A549 (cell line): ENCODE measurements at regions of chr12 and their contacts with region 1.

Region 1: DNA sequence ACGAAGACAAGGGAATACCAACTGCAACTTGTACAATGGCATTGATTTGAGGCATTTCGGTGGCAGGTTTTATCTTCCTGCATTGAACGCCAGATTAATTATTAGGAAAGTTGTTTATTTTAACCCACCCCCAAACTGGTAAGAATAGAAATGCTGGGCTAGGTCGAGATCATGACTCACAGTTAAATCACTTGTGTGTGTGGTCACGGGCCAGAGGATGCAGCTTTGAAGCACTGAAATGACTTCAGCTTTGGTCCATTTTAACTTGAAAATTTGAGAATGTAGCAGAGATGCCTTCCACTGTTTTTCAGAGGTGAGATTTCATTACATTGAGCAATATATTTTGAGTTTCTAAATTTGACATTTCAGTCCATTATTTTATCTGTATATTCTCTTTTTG is 23.6 kb upstream of the KCNH3 start:
- DNase-seq: peak; percentile 47 to 64
- ATAC-seq: peak in 1 of 2 experiments; percentile 68; a peak in 3 of 6 replicates
- H3K4me3 ChIP-seq: no peak overlapping the region
- H3K27ac ChIP-seq: peak overlapping the region; percentile 70 to 87
- H3K4me1 ChIP-seq: peaks cover 81% of the 10 kb centered on the region
- CTCF ChIP-seq: no peak
- EP300 ChIP-seq: peak; percentile 23 to 27; a peak in 1 of 5 replicates
- POLR2A ChIP-seq: no peak
- RAD21 ChIP-seq: 0 out of 5 replicates have a peak, but pooled peaks of 1 of the 2 experiments have one; percentile 30

Region 2: DNA sequence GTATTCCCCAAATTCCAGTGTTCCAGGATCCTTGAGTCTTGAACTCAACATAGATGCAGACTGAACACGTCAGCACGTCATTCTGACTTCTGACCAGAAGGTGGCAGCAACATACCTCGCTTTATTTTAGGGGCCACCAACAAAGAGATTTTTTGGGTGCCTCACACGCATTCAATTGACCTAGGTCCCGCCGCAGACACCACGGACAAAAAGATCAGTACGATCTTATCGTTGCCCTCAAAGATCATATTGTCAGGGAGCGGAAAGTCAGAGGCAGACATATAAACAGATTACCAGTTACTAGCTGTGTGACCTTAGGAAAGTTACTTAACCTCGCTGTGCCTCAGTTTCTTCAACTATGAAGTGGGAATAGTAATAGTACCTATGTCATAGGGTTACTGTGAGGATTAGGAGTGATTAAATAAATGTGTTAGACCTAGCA is 226.8 kb before region 1 on chr12:
- CTCF ChIA-PET with region 1: interaction called, 19 read pairs
- POLR2A ChIA-PET with region 1: no interaction called
- DNase-seq: peak; percentile 66 to 70
- ATAC-seq: peak; percentile 47 to 66; a peak in 4 of 6 replicates
- H3K4me3 ChIP-seq: no peak overlapping the region
- H3K27ac ChIP-seq: no peak overlapping the region
- H3K4me1 ChIP-seq: 0 out of 3 replicates have a peak, but pooled peaks cover 12% of the 10 kb centered on the region
- CTCF ChIP-seq: peak; percentile 96
- EP300 ChIP-seq: no peak
- POLR2A ChIP-seq: no peak
- RAD21 ChIP-seq: peak; percentile 89 to 91

Region 3: GRCh38 chr12:49366652-49367380 is 148.4 kb before region 1 on chr12:
- CTCF ChIA-PET with region 1: interaction called, 484 read pairs
- POLR2A ChIA-PET with region 1: interaction called, 25 read pairs
- DNase-seq: peak; percentile 95 to 97
- ATAC-seq: peak; percentile 87 to 90
- H3K4me3 ChIP-seq: peak overlapping the region; percentile 86
- H3K27ac ChIP-seq: peak overlapping the region; percentile 95 to 96
- H3K4me1 ChIP-seq: peaks cover 36% of the 10 kb centered on the region
- CTCF ChIP-seq: no peak
- EP300 ChIP-seq: no peak
- POLR2A ChIP-seq: peak; percentile 65
- RAD21 ChIP-seq: no peak

Region 4: GRCh38 chr12:49489720-49490119 is 25.5 kb before region 1 on chr12:
- CTCF ChIA-PET with region 1: interaction called, 17 read pairs
- POLR2A ChIA-PET with region 1: no interaction called
- DNase-seq: no peak
- ATAC-seq: peak in 1 of 2 experiments; percentile 41; a peak in 3 of 6 replicates
- H3K4me3 ChIP-seq: no peak overlapping the region
- H3K27ac ChIP-seq: no peak overlapping the region
- H3K4me1 ChIP-seq: peaks cover 26% of the 10 kb centered on the region
- CTCF ChIP-seq: no peak
- EP300 ChIP-seq: no peak
- POLR2A ChIP-seq: no peak
- RAD21 ChIP-seq: no peak

Region 5: DNA sequence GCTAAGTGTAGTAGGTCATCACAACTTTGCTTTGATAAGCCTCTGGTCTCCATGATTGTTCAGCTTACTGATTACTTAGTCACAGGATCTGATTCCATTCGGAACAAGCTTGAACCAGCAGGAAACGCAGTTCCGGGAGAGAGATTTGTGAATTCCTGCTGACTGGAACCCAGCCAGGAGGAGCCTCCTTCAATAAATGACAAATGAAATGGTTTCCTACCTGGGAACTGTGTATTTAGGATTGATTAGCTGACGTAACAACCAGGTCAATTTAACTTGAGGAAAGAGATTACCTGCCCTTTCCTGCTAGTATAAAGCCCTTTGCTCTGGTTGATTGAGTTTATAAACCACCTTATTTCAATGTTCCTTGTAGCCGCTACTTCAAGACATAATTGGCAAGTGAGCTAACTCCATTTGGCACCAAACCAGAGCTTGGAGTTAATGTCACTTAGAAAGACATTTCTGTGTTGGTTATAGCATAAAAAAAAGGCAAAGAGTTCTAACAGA is 11.5 kb before region 1 on chr12:
- CTCF ChIA-PET with region 1: interaction called, 31 read pairs
- POLR2A ChIA-PET with region 1: interaction called, 4 read pairs
- DNase-seq: peak; percentile 44 to 88
- ATAC-seq: peak in 1 of 2 experiments; percentile 66; a peak in 3 of 6 replicates
- H3K4me3 ChIP-seq: peak overlapping the region; percentile 25; the same call in 2 of the 3 replicates
- H3K27ac ChIP-seq: peak overlapping the region; percentile 78 to 84
- H3K4me1 ChIP-seq: peaks cover 60% of the 10 kb centered on the region
- CTCF ChIP-seq: no peak
- EP300 ChIP-seq: peak in 1 of 2 experiments; percentile 68; a peak in 1 of 5 replicates
- POLR2A ChIP-seq: no peak
- RAD21 ChIP-seq: no peak

Region 6: DNA sequence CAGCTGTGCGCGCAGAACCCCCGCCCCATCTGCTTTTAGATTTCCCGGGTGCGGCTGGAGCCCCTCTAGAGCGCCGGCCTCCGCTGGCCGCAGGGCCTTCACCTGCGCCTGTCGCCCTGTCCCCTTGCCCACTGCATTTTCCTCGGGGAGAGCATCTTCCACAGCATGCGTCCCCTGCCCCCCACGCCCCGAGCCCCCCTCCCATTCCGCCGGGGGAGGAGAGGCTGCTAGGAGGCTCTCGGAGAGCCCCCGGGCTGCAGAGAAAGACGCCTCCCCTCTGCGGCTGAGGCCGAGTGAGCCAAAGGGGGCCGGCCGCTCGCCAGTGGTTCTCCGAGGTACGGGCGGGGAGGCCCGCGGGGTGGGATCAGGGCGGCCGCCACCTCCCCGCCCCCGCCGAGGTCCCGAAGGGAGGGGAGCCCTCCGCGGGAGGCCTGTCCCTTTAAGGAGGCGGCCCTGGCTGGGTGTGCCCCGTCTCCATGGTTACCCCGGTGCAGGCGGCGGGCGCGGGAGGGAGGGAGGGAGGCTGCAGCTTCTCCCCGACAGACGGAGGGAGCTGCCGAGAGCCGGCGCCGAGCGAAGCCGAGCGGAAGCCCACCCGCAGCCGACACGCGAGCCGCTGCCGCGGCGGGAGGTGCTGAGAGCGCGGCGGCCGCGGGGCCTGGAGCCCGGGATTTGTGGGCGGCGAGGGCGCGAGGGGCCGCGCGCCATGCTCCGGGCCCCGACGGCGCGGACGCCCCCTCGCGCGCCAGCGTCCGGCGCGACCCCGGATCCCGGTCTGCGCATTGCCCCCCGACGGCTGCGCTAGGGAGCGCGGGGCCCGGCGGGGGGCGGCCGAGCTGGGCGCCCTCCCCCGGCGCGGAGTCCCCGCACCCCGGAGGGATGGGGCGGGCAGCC is 23.5 kb after region 1 on chr12 and contains the start of gene KCNH3:
- CTCF ChIA-PET with region 1: interaction called, 12 read pairs
- POLR2A ChIA-PET with region 1: no interaction called
- DNase-seq: peak; percentile 71 to 88
- ATAC-seq: peak; percentile 72 to 77
- H3K4me3 ChIP-seq: peak within 1 kb of the TSS; percentile 76
- H3K27ac ChIP-seq: peak within 1 kb of the TSS; percentile 65 to 91
- H3K4me1 ChIP-seq: peaks cover 32% of the 10 kb centered on the region
- CTCF ChIP-seq: no peak
- EP300 ChIP-seq: no peak
- POLR2A ChIP-seq: no peak
- RAD21 ChIP-seq: no peak
- polyA plus RNA-seq, gene KCNH3: 1.0 and 1.2 TPM in 2 replicates

Region 7: DNA sequence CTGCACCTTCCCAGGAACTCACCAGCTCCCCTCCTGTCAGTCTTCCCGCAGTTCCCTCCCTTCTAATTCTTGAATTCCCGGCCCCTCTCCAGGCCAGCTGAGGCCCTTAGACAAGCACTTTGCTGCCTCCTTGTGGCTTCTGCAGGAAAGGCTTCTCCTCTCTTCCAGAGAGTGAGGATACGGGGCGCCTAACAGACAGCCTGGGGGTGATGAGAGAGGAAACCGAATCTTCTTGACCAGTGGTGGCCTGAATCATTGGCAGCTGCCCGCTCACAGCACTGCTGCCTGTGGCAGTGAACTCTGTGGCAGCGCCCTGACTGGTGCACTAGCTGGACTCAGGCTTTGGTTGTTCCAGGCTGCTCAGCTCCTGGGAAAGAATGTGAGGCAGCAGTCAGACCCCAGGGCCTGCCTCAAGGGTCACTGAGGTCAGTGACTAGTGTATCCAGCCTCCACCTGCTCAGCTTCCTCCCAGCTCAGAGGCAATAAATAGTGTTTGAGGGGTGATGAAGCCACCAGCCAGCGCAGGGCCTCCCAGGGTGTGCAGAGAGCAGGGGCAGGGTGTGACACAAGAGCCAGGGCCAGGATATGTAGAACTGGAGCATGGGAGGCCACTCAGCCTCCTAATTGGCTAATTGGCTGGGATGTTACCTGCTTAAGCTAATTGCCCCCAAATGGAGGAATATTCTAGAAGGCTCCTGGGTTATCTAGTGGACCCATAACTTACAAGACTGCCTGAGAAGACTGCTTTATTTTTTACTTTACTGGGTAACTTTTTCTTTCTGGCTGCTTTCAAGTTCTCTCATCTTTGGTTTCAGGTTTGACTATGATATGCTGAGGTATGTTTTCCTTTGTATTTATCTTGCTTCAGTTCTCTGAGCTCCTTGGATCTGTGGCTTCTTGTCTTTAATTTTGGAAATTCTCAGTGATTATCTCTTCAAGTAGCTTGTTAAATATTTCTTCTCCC is 65.6 kb after region 1 on chr12:
- CTCF ChIA-PET with region 1: interaction called, 32 read pairs
- POLR2A ChIA-PET with region 1: no interaction called
- DNase-seq: peak; percentile 83 to 86
- ATAC-seq: peak; percentile 95 to 98
- H3K4me3 ChIP-seq: no peak overlapping the region
- H3K27ac ChIP-seq: 0 out of 6 replicates have a peak overlapping the region, but pooled peaks of 1 of the 2 experiments have one; percentile 22
- H3K4me1 ChIP-seq: peaks cover 16% of the 10 kb centered on the region; the same call in 2 of the 3 replicates
- CTCF ChIP-seq: peak; percentile 81
- EP300 ChIP-seq: no peak
- POLR2A ChIP-seq: no peak
- RAD21 ChIP-seq: peak; percentile 83 to 90